ENCODE measurements at regions of chr15 and their contacts with region 1.

Region 1: GRCh38 chr15:68795298-68795848 is 25.3 kb downstream of the ANP32A start:
- DNase-seq: peak; percentile 29 to 78 (median 62)
- ATAC-seq: peak; percentile 69 to 84 (median 81)
- H3K4me3 ChIP-seq: peak overlapping the region in 1 of 2 donors; percentile 47
- H3K4me3 Mint-ChIP-seq: peak overlapping the region; percentile 28 to 65 (median 58)
- H3K27ac ChIP-seq: peak overlapping the region; percentile 22
- H3K27ac Mint-ChIP-seq: peak overlapping the region; percentile 75 to 83
- H3K4me1 ChIP-seq: peaks cover 50 to 89% of the 10 kb centered on the region in 2 experiments
- H3K4me1 Mint-ChIP-seq: peaks cover 96 to 99% (median 97%) of the 10 kb centered on the region in 3 donors
- H3K27me3 ChIP-seq: no peaks in the 10 kb centered on the region
- H3K27me3 Mint-ChIP-seq: no peaks in the 10 kb centered on the region

Region 2: DNA sequence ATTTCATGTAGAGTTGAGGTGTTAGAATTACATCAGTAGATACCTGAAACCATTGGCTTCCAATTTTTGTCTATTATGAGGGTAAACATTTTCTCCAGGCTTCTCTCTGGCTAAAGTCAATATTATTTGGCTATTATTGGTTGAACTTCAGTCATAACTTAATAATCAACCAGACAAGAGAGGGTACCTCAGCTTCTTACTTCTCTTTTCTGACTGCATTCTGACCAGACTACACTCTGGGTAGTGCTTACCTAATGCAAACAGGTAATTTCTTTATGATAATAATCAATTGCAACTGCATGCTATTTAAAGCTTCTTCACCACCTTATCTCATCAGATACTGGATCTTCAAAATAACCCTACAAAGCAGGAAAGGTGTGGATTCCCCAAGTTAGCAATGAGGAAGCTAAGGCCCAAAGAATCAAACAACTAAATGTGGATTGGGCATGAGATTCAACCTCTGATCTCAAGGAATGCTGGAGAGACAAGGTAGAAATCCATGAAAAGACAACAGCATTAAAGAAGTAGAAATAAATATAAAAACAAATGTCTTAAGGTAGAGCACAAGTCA is 59.7 kb before region 1 on chr15:
- CTCF ChIA-PET with region 1: interaction called in 1 of 2 experiments, 10 read pairs
- POLR2A ChIA-PET with region 1: no interaction called
- DNase-seq: no peak
- ATAC-seq: no peak
- H3K4me3 ChIP-seq: no peak overlapping the region
- H3K4me3 Mint-ChIP-seq: no peak overlapping the region
- H3K27ac ChIP-seq: no peak overlapping the region
- H3K27ac Mint-ChIP-seq: no peak overlapping the region
- H3K4me1 ChIP-seq: no peaks in the 10 kb centered on the region
- H3K4me1 Mint-ChIP-seq: peaks cover 0 to 7% (median 5%) of the 10 kb centered on the region in 3 donors
- H3K27me3 ChIP-seq: peaks cover 0 to 5% of the 10 kb centered on the region in 2 experiments
- H3K27me3 Mint-ChIP-seq: no peaks in the 10 kb centered on the region

Region 3: DNA sequence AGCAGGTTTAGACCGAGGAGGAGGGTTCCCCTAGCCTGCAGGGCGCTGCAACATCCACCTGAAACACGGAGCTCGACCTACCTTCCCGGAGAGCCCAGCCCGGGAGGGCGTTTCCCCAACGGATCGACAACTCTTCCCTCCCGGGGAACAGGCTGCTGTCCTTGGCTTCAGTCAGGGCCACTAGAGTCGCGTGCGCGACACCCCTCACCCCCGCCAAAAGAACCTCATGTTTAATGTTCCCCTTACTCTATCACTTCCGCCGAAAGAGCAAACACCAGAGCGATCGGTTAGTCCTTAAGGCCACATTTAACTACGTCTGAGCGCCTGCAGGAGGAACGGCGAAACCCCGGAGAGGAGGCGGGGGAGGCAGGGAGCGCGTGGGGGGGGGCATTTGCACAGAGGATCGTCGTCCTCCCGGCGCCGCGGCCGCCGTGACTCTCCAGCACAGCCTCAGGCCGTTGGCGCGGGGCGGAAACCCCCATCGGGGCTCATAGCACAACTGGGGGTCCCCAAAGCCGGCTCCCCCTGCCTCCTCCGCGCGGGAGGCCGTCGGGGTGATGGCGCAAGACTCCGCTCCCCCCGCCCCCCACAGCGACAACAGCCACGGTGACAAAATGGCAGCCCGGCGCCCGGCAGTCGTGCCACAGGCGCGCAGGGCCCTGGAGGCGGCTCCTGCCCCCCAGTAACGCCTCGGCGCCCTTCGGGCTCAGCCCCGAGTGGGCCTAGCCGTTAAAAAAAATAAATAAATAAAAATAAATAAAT is 22.1 kb after region 1 on chr15:
- CTCF ChIA-PET with region 1: interaction called, 3 to 21 read pairs
- POLR2A ChIA-PET with region 1: interaction called in 1 of 2 experiments, 8 read pairs
- DNase-seq: peak; percentile 50 to 85 (median 68)
- ATAC-seq: peak; percentile 46 to 60 (median 50)
- H3K4me3 ChIP-seq: peak overlapping the region; percentile 95 to 98
- H3K4me3 Mint-ChIP-seq: peak overlapping the region; percentile 93 to 99 (median 98)
- H3K27ac ChIP-seq: peak overlapping the region; percentile 87
- H3K27ac Mint-ChIP-seq: peak overlapping the region; percentile 94 to 95
- H3K4me1 ChIP-seq: peaks cover 25 to 42% of the 10 kb centered on the region in 2 experiments
- H3K4me1 Mint-ChIP-seq: peaks cover 51 to 54% (median 51%) of the 10 kb centered on the region in 3 donors
- H3K27me3 ChIP-seq: no peaks in the 10 kb centered on the region
- H3K27me3 Mint-ChIP-seq: peaks cover 0 to 1% of the 10 kb centered on the region in 2 donors

Measured in T-cell (primary cell).